Cardiac septum (tissue), 1 donor: ENCODE measurements at regions of chr5 and their contacts with region 1.

Region 1: DNA sequence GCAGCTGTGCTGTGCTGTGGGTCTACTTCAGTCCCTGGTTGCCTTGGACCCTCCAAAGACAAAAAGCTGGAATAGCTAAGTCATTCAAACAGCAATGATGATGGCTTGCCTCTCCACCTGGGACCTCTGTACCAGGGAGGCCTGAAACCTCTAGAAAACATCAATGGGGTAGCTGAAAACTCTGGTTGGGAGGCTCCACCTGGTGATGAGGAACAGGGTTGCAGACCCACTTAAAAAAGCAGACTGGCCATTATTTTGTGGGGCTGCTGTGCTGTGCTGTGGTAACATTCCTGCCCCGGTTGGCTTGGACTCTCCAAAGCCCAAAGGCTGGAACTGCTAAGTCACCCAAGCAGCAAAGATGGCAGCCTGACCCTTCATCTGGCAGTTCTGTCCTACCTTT is 839.3 kb upstream of the ARRDC3 start:
- DNase-seq: no peak

Region 2: GRCh38 chr5:91928754-91929521 is 293.5 kb before region 1 on chr5:
- intact Hi-C with region 1: loop called (anchors 5 kb)
- DNase-seq: no peak

Region 3: GRCh38 chr5:92147266-92147665 is 75.2 kb before region 1 on chr5:
- intact Hi-C with region 1: no loop called
- DNase-seq: no peak